ENCODE measurements at regions of chr11 and their contacts with region 1.

Region 1: GRCh38 chr11:43282607-43283440 is 29.0 kb upstream of the API5 start:
- DNase-seq: peak; percentile 61
- CTCF ChIP-seq: peak; percentile 81

Region 2: DNA sequence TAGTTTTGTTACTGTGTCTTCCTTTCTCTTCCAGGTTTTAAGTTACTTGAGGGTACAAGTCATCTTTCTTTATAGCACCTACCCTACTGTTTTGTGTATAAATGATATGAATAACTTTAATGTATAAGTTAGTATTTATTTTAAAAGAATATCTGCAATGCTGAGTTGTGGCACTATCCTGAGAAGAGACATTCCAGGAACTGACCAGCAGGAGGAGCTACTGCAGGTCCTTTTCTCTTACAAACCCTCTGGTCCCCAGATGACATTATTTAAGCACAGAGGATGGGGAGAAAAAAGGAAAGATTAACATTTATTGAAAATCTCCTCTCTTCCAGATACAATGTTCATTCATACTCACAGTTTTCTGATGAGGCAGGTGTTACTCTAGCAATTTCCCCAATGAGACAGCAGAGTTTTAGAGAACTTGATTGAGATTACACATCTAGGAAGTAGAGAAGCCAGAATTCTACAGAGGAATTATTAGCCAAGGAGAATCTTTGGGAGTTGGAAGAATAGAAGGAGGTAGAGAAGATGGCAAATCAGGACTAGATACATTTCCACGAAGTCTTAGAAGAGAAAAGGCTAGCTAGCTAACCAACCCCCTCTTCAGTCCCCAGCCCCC is 512.3 kb before region 1 on chr11:
- in situ Hi-C with region 1: loop called (anchors 25 kb)
- DNase-seq: peak; percentile 24
- CTCF ChIP-seq: peak; percentile 72

Region 3: GRCh38 chr11:43072096-43072495 is 210.7 kb before region 1 on chr11:
- in situ Hi-C with region 1: no loop called
- DNase-seq: no peak
- CTCF ChIP-seq: no peak

Region 4: DNA sequence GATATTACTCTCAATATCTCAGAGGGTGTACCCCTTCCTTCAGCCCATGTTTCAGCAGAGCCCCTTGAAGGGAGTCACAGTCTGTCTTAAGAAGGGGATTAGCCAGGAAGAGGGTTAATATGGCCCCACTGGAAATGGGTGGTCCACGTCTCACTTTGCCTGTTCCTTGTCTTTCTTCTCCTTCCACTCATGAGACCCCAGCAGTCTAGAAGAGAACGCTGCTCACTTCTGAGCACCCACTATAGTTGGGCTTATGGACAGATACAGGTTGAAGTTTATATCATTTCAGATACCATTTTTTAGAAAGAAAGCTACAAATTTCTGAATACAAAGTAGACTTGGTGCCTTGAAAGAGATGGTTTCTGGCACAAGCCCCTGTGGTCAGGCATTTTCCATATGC is 110.3 kb before region 1 on chr11:
- in situ Hi-C with region 1: no loop called
- DNase-seq: no peak
- CTCF ChIP-seq: no peak